ENCODE measurements at regions of chr3 and their contacts with region 1.

Region 1: GRCh38 chr3:187223799-187224198 is 26.5 kb downstream of the RTP1 start:
- DNase-seq: no peak
- H3K4me3 ChIP-seq: no peak overlapping the region
- H3K27ac ChIP-seq: no peak overlapping the region
- H3K4me1 ChIP-seq: peaks cover 0 to 28% (median 12%) of the 10 kb centered on the region in 4 donors
- H3K27me3 ChIP-seq: no peaks in the 10 kb centered on the region
- CTCF ChIP-seq: no peak
- EP300 ChIP-seq: no peak
- POLR2A ChIP-seq: no peak

Region 2: GRCh38 chr3:187062561-187063074 is 161.2 kb before region 1 on chr3:
- intact Hi-C with region 1: no loop called
- DNase-seq: no peak
- H3K4me3 ChIP-seq: no peak overlapping the region
- H3K27ac ChIP-seq: no peak overlapping the region
- H3K4me1 ChIP-seq: no peaks in the 10 kb centered on the region
- H3K27me3 ChIP-seq: no peaks in the 10 kb centered on the region
- CTCF ChIP-seq: no peak
- EP300 ChIP-seq: no peak
- POLR2A ChIP-seq: no peak

Region 3: DNA sequence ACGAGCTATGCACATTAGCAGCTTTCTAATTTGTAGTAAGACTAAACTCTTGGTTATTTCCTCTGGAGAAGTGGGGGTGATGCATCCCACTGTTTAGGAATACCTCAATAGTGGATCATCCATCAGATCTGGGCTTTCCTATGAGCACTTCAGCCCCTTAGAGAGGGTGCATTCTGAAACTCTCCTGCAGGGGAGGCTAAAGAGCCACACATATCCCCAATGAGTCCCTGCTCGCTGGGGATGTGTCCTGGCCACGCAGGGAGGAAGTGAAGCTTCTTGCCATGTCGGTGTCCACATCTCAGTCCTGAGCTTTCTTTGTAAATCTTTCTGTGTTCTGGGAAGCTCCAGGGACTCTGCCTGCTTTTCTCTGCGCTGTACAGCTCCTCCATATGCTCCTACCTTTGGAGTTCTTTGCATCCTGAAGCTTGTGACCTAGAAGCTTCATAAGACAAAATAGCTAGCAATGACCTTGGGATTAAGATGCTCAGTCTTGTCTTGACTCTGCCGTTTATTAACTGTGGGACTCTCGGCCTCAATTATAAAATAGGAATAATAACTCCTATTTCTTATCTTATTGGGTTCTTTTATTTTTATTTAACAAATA is 96.0 kb after region 1 on chr3:
- intact Hi-C with region 1: loop called (anchors 2 kb)
- DNase-seq: peak; percentile 81
- H3K4me3 ChIP-seq: no peak overlapping the region
- H3K27ac ChIP-seq: no peak overlapping the region
- H3K4me1 ChIP-seq: peaks cover 0 to 15% (median 10%) of the 10 kb centered on the region in 4 donors
- H3K27me3 ChIP-seq: no peaks in the 10 kb centered on the region
- CTCF ChIP-seq: peak; percentile 70 to 98 (median 90)
- EP300 ChIP-seq: no peak
- POLR2A ChIP-seq: no peak

Region 4: DNA sequence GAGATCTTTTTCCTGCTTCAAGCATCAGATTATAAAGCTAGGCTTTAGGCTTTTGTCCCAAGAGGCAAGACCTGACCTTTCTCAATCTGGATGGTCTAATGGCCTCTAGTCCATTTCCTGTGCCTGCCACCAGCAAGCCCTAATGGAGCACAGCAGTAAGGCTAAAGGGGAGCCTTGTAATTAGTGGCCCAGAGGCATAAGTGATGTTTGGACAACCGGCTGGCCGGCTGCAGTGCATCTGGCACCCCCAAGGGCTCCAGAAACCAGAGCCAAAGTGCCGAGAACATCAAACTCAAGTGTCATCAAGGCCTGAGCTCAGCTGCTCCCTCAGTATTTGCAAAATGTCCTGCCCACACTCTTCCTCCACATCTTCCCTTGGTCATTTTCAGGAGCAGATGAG is 112.5 kb after region 1 on chr3:
- intact Hi-C with region 1: no loop called
- DNase-seq: no peak
- H3K4me3 ChIP-seq: no peak overlapping the region
- H3K27ac ChIP-seq: no peak overlapping the region
- H3K4me1 ChIP-seq: no peaks in the 10 kb centered on the region
- H3K27me3 ChIP-seq: no peaks in the 10 kb centered on the region
- CTCF ChIP-seq: no peak
- EP300 ChIP-seq: no peak
- POLR2A ChIP-seq: no peak